K562 (cell line): ENCODE measurements at regions of chr12 and their contacts with region 1.

Region 1: GRCh38 chr12:52980693-52981423 is 25.4 kb upstream of the EIF4B start:
- DNase-seq: peak; percentile 84 to 96 (median 86)
- ATAC-seq: peak; percentile 95
- H3K4me3 ChIP-seq: no peak overlapping the region
- H3K27ac ChIP-seq: no peak overlapping the region
- H3K4me1 ChIP-seq: peaks cover 0 to 14% of the 10 kb centered on the region in 2 experiments; a peak in 3 of 5 replicates
- H3K27me3 ChIP-seq: no peaks in the 10 kb centered on the region
- CTCF ChIP-seq: peak; percentile 99 to 100 (median 99)
- EP300 ChIP-seq: peak; percentile 36; the same call in 1 of the 2 replicates
- POLR2A ChIP-seq: no peak
- RAD21 ChIP-seq: peak; percentile 100

Region 2: GRCh38 chr12:52156736-52157565 is 823.9 kb before region 1 on chr12:
- CTCF ChIA-PET with region 1: interaction called, 4 read pairs
- POLR2A ChIA-PET with region 1: no interaction called
- in situ Hi-C with region 1: no loop called
- intact Hi-C with region 1: loop called (anchors 5 kb)
- DNase-seq: peak; percentile 76 to 86 (median 82)
- ATAC-seq: peak; percentile 88
- H3K4me3 ChIP-seq: no peak overlapping the region
- H3K27ac ChIP-seq: no peak overlapping the region
- H3K4me1 ChIP-seq: peaks cover 0 to 6% of the 10 kb centered on the region in 2 experiments; a peak in 3 of 5 replicates
- H3K27me3 ChIP-seq: peaks cover 7 to 18% of the 10 kb centered on the region in 2 experiments; a peak in 4 of 5 replicates
- CTCF ChIP-seq: peak; percentile 90 to 96 (median 92)
- EP300 ChIP-seq: no peak
- POLR2A ChIP-seq: no peak
- RAD21 ChIP-seq: peak; percentile 81 to 90

Region 3: DNA sequence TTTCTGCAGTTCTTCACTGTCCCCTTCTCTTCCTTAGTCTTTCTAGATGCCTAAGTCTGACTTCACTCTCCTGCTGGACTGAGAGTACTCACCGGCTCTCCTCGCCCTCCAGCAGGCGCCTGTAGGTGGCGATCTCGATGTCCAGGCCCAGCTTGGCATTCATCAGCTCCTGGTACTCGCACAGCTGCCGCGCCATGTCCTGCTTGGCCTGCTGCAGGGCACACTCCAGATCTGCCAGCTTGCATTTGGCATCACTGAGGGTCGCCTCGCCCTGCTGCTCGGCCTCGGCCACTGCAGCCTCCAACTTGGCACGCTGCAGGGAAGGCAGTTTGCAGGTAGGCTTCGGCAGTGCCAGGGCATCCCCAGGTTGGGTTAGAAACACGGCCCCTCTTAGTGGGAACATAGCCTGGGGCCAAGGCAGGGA is 600.6 kb before region 1 on chr12:
- CTCF ChIA-PET with region 1: no interaction called
- POLR2A ChIA-PET with region 1: no interaction called
- in situ Hi-C with region 1: loop called (anchors 5 kb)
- intact Hi-C with region 1: loop called (anchors 10 kb)
- DNase-seq: peak in 2 of 4 experiments; percentile 8 to 18
- ATAC-seq: peak; percentile 60
- H3K4me3 ChIP-seq: no peak overlapping the region
- H3K27ac ChIP-seq: no peak overlapping the region
- H3K4me1 ChIP-seq: peaks cover 0 to 5% of the 10 kb centered on the region in 2 experiments; a peak in 1 of 5 replicates
- H3K27me3 ChIP-seq: peaks cover 5 to 62% of the 10 kb centered on the region in 2 experiments; a peak in 4 of 5 replicates
- CTCF ChIP-seq: peak; percentile 44 to 48 (median 45); a peak in 5 of 6 replicates
- EP300 ChIP-seq: no peak
- POLR2A ChIP-seq: no peak
- RAD21 ChIP-seq: no peak

Region 4: GRCh38 chr12:52645120-52645761 is 335.6 kb before region 1 on chr12:
- CTCF ChIA-PET with region 1: no interaction called
- POLR2A ChIA-PET with region 1: no interaction called
- in situ Hi-C with region 1: no loop called
- intact Hi-C with region 1: no loop called
- DNase-seq: peak; percentile 27 to 43 (median 40)
- ATAC-seq: peak; percentile 70
- H3K4me3 ChIP-seq: no peak overlapping the region
- H3K27ac ChIP-seq: peak overlapping the region; percentile 20; the same call in 1 of the 3 replicates
- H3K4me1 ChIP-seq: peaks cover 21 to 33% of the 10 kb centered on the region in 2 experiments
- H3K27me3 ChIP-seq: no peaks in the 10 kb centered on the region
- CTCF ChIP-seq: no peak
- EP300 ChIP-seq: no peak
- POLR2A ChIP-seq: no peak
- RAD21 ChIP-seq: no peak

Region 5: DNA sequence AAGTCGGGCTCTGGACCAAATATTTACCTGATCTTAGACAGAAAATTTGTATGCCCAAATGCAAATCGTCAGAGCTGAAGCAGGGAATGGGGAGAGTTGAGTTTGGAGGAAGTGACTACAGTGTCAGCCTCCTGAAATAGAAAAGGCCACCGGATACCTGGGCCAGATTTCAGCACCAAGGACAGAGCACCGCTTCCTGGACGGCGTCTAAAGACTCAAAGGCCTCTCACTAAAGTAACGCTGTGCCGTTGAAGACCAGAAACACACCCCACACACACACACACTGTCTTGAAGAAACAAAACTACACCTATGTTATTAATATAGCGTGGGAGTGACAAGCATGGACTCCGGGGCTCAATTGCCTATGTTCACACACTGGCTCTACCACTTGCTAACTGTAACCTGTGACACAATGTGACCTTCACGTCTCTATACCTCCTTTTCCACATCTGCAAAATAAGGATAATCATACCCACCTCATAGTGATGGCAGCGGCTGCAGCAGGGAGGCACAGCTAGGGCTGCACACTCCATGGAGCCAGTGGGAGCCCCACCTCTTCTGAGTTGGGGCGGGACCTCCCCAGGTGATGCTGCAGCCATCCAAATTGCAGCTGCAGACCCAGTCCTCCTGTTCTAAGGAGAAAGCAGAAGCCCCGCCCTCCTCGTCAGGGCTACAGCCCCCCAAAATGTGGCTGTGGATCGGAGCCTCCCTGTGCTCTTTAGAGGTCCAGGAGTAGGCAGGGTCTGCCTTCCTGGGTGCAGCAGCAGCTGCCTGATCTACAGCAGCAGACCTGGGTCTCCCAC is 239.3 kb before region 1 on chr12:
- CTCF ChIA-PET with region 1: no interaction called
- POLR2A ChIA-PET with region 1: no interaction called
- in situ Hi-C with region 1: no loop called
- intact Hi-C with region 1: no loop called
- DNase-seq: peak; percentile 37 to 79 (median 52)
- ATAC-seq: peak; percentile 88
- H3K4me3 ChIP-seq: no peak overlapping the region
- H3K27ac ChIP-seq: no peak overlapping the region
- H3K4me1 ChIP-seq: peaks cover 0 to 4% of the 10 kb centered on the region in 2 experiments; a peak in 1 of 5 replicates
- H3K27me3 ChIP-seq: peaks cover 0 to 7% of the 10 kb centered on the region in 2 experiments; a peak in 3 of 5 replicates
- CTCF ChIP-seq: no peak
- EP300 ChIP-seq: no peak
- POLR2A ChIP-seq: no peak
- RAD21 ChIP-seq: no peak

Region 6: DNA sequence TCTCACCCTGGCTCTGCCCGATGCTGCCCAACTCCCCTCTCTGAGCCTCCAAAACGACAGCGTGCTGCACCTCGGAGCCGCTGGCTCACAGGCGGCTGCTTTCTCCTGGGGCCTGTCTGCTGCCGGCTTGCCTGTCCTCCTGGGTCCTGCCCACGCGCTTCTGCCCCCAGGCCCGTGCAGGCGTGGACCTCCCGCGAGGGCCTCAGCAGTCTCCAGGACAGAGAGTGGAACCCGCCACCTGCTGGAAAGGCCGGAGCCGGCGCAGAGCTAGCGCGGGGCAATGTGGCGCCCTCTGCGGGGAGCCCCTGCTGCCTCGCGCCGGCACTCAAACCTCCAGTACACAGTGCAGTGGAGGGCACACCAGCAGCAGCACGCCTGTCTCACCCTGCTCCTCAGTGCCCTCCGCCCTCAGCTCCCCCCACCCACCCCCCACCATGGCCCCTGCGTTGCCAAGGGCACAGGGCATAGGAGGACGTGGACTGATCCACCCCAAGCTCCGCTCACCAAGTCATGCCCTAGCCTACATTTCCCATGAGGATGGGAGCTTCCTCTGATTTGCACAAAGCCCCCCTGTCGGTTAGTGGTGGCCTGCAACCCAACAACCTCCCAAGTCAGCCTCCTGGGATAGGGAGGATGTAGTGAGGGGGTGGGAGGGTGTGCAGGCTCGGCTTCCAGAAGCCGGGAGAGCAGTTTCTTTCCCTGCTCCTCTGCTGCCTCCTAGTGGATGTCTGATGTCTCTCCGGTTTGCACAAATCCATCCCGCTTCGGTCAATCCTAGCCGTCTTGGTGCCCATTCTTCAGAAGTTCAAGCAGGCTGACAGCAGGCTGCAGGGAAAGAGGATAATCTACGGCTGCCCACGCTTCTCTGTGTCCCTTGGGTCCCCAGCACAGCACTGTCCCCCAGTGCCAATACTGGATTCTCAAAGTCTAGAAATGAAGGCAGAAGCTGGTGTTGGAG is 101.2 kb before region 1 on chr12:
- CTCF ChIA-PET with region 1: interaction called, 398 read pairs
- POLR2A ChIA-PET with region 1: interaction called, 23 read pairs
- in situ Hi-C with region 1: no loop called
- intact Hi-C with region 1: loop called (anchors 1 kb)
- DNase-seq: peak; percentile 83 to 90 (median 86)
- ATAC-seq: peak; percentile 95
- H3K4me3 ChIP-seq: peak overlapping the region; percentile 30
- H3K27ac ChIP-seq: peak overlapping the region; percentile 29; the same call in 1 of the 3 replicates
- H3K4me1 ChIP-seq: peaks cover 35% of the 10 kb centered on the region in 2 experiments
- H3K27me3 ChIP-seq: no peaks in the 10 kb centered on the region
- CTCF ChIP-seq: peak; percentile 83 to 100 (median 99)
- EP300 ChIP-seq: 0 out of 2 replicates have a peak, but pooled peaks have one; percentile 7
- POLR2A ChIP-seq: peak; percentile 43; the same call in 1 of the 2 replicates
- RAD21 ChIP-seq: peak; percentile 85 to 91

Region 7: GRCh38 chr12:52895061-52895887 is 85.6 kb before region 1 on chr12:
- CTCF ChIA-PET with region 1: interaction called, 398 read pairs
- POLR2A ChIA-PET with region 1: interaction called, 11 read pairs
- in situ Hi-C with region 1: no loop called
- intact Hi-C with region 1: no loop called
- DNase-seq: peak in 2 of 4 experiments; percentile 36 to 37
- ATAC-seq: peak; percentile 27
- H3K4me3 ChIP-seq: no peak overlapping the region
- H3K27ac ChIP-seq: no peak overlapping the region
- H3K4me1 ChIP-seq: peaks cover 8 to 16% of the 10 kb centered on the region in 2 experiments
- H3K27me3 ChIP-seq: no peaks in the 10 kb centered on the region
- CTCF ChIP-seq: no peak
- EP300 ChIP-seq: no peak
- POLR2A ChIP-seq: no peak
- RAD21 ChIP-seq: no peak

Region 8: DNA sequence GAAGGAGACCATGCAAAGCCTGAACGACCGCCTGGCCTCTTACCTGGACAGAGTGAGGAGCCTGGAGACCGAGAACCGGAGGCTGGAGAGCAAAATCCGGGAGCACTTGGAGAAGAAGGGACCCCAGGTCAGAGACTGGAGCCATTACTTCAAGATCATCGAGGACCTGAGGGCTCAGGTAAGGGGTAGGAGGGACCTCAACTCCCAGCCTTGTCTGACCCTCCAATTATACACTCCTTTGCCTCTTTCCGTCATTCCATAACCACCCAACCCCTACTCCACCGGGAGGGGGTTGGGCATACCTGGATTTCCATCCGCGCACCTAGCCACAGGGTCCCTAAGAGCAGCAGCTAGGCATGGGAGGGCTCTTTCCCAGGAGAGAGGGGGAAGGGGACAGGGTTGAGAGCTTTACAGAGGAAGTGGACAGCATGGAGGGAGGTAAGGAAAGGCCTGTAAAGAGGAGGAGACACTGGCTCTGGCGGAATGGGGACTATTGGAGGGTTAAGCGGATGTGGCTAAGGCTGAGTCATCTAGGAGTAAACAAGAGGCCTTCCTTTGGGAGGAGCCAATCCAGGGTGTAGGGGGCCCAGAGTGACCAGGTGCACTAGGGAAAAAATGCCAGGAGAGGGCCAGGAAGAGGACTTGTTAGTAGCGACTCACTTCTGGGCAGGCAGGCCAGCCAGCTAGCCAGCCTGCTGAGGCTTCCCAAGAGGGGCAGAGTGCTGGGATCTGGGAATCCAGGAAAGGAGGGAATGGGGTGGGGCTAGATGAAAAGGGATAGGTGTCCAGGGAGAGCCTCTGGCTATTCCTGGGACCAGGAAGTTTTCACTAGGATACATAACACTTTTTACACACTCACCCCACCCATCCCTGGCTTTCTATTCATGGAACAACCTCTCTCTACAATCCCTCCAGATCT is 31.2 kb before region 1 on chr12:
- CTCF ChIA-PET with region 1: interaction called, 5 read pairs
- POLR2A ChIA-PET with region 1: interaction called, 6 read pairs
- in situ Hi-C with region 1: no loop called
- intact Hi-C with region 1: loop called (anchors 2 kb)
- DNase-seq: peak; percentile 82 to 93 (median 86)
- ATAC-seq: peak; percentile 87
- H3K4me3 ChIP-seq: peak overlapping the region; percentile 99
- H3K27ac ChIP-seq: peak overlapping the region; percentile 100
- H3K4me1 ChIP-seq: peaks cover 47 to 58% of the 10 kb centered on the region in 2 experiments
- H3K27me3 ChIP-seq: no peaks in the 10 kb centered on the region
- CTCF ChIP-seq: no peak; a peak in 1 of 6 replicates
- EP300 ChIP-seq: peak; percentile 81
- POLR2A ChIP-seq: peak; percentile 96
- RAD21 ChIP-seq: no peak; a peak in 2 of 4 replicates